ENCODE measurements at regions of chr1 and their contacts with region 1.

Region 1: DNA sequence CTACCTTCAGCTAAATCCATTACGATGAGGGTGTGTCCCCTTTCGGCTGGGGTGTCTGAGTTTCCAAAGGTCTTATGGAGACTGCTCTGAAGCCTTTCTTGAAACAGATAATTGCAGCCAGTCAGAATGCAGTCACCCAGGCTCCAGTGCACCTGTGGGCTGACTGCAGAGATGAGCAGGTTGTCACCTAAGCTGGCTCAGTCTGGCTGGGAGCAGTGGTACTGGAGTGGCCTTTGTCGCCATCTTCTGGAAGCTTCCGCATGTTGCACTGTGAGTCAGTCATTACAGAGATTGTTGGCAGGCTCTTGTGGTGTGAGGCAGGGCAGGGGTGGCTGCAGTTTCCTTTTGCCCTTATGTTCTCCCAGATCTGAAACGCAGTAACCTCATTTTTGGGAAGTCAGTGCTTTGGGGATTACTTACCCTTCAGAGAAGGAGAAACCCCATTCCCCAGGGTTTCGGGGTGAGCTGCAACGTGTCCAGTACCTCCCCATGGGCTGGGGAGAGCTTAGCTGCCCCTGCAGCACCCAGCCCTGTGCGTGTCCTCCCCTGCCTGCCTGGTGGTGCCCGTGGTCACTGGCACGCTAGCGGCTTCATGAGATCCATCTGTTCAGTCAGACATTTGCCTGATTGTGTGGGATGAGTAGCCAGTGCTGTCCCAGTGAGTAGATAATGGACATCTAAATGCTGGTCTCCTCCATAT is 48.0 kb downstream of the SMYD2 start:
- DNase-seq: peak; percentile 73
- ATAC-seq: peak; percentile 90

Region 2: GRCh38 chr1:214248311-214249085 is 80.4 kb before region 1 on chr1:
- intact Hi-C with region 1: no loop called
- DNase-seq: no peak
- ATAC-seq: no peak

Region 3: GRCh38 chr1:214261206-214262123 is 67.5 kb before region 1 on chr1:
- intact Hi-C with region 1: loop called (anchors 1 kb)
- DNase-seq: peak; percentile 90
- ATAC-seq: peak; percentile 98

Region 4: GRCh38 chr1:214446772-214447556 is 118.0 kb after region 1 on chr1:
- intact Hi-C with region 1: no loop called
- DNase-seq: no peak
- ATAC-seq: no peak

Measured in Right ventricle myocardium inferior (tissue), 1 donor.